IMR-90 (cell line): ENCODE measurements at regions of chr2 and their contacts with region 1.

Region 1: GRCh38 chr2:148644883-148645538 is 460 bp downstream of the EPC2 start:
- DNase-seq: peak; percentile 90
- ATAC-seq: peak; percentile 92
- H3K4me3 ChIP-seq: peak overlapping the region; percentile 86
- H3K27ac ChIP-seq: peak overlapping the region; percentile 98
- H3K4me1 ChIP-seq: no peaks in the 10 kb centered on the region
- H3K27me3 ChIP-seq: peaks cover 12% of the 10 kb centered on the region; the same call in 1 of the 2 replicates
- CTCF ChIP-seq: peak; percentile 37
- POLR2A ChIP-seq: peak; percentile 76
- RAD21 ChIP-seq: peak; percentile 24; the same call in 1 of the 2 replicates

Region 2: GRCh38 chr2:148781544-148781943 is 136.5 kb after region 1 on chr2:
- CTCF ChIA-PET with region 1: no interaction called
- POLR2A ChIA-PET with region 1: no interaction called
- dilution Hi-C with region 1: no loop called
- in situ Hi-C with region 1: no loop called
- intact Hi-C with region 1: loop called (anchors 5 kb)
- DNase-seq: no peak
- ATAC-seq: no peak
- H3K4me3 ChIP-seq: no peak overlapping the region
- H3K27ac ChIP-seq: no peak overlapping the region
- H3K4me1 ChIP-seq: peaks cover 9% of the 10 kb centered on the region
- H3K27me3 ChIP-seq: no peaks in the 10 kb centered on the region
- CTCF ChIP-seq: no peak
- POLR2A ChIP-seq: no peak
- RAD21 ChIP-seq: no peak

Region 3: GRCh38 chr2:148926291-148926961 is 281.4 kb after region 1 on chr2:
- CTCF ChIA-PET with region 1: no interaction called
- POLR2A ChIA-PET with region 1: no interaction called
- dilution Hi-C with region 1: no loop called
- in situ Hi-C with region 1: no loop called
- intact Hi-C with region 1: loop called (anchors 5 kb)
- DNase-seq: peak; percentile 12
- ATAC-seq: peak; percentile 77
- H3K4me3 ChIP-seq: no peak overlapping the region
- H3K27ac ChIP-seq: no peak overlapping the region
- H3K4me1 ChIP-seq: no peaks in the 10 kb centered on the region
- H3K27me3 ChIP-seq: no peaks in the 10 kb centered on the region
- CTCF ChIP-seq: peak; percentile 63
- POLR2A ChIP-seq: no peak
- RAD21 ChIP-seq: peak; percentile 51

Region 4: DNA sequence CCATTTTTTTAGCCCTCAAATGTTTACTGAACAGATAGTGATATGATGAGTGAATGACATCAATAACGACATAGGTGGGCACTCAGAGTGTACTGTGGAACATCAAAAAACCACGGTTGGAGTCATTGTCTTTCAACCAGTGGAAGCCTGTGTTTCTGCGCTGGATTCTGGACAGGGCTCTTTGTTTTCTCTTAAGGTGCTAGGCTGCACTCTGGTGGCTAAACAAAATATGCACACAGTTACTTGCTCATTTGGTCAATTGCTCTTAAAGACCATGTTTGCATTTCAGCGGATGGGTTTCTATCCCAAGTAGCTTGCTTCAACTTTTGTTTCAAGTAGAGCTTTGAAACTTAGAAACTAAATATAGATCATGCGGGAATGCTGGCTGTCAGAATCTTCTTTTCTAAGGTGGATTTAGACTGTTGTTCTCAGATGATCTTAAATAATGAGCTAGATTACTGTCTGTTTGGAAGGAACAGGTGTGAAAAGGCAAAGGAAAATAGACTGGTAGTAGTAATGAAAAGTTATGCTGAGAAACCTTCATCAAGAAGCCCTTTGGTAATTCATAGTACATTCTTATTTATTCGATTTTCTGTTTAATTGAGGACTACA is 345.0 kb after region 1 on chr2:
- CTCF ChIA-PET with region 1: interaction called, 4 read pairs
- POLR2A ChIA-PET with region 1: no interaction called
- dilution Hi-C with region 1: no loop called
- in situ Hi-C with region 1: no loop called
- intact Hi-C with region 1: loop called (anchors 1 kb)
- DNase-seq: peak; percentile 80
- ATAC-seq: peak; percentile 90
- H3K4me3 ChIP-seq: no peak overlapping the region
- H3K27ac ChIP-seq: no peak overlapping the region
- H3K4me1 ChIP-seq: no peaks in the 10 kb centered on the region
- H3K27me3 ChIP-seq: no peaks in the 10 kb centered on the region
- CTCF ChIP-seq: peak; percentile 71
- POLR2A ChIP-seq: no peak
- RAD21 ChIP-seq: peak; percentile 80

Region 5: GRCh38 chr2:149561309-149561926 is 916.4 kb after region 1 on chr2:
- CTCF ChIA-PET with region 1: no interaction called
- POLR2A ChIA-PET with region 1: no interaction called
- dilution Hi-C with region 1: no loop called
- in situ Hi-C with region 1: loop called (anchors 25 kb)
- intact Hi-C with region 1: loop called (anchors 10 kb)
- DNase-seq: peak; percentile 30
- ATAC-seq: peak; percentile 38; the same call in 1 of the 2 replicates
- H3K4me3 ChIP-seq: no peak overlapping the region
- H3K27ac ChIP-seq: no peak overlapping the region
- H3K4me1 ChIP-seq: no peaks in the 10 kb centered on the region
- H3K27me3 ChIP-seq: no peaks in the 10 kb centered on the region
- CTCF ChIP-seq: peak; percentile 83
- POLR2A ChIP-seq: no peak
- RAD21 ChIP-seq: peak; percentile 71

Region 6: DNA sequence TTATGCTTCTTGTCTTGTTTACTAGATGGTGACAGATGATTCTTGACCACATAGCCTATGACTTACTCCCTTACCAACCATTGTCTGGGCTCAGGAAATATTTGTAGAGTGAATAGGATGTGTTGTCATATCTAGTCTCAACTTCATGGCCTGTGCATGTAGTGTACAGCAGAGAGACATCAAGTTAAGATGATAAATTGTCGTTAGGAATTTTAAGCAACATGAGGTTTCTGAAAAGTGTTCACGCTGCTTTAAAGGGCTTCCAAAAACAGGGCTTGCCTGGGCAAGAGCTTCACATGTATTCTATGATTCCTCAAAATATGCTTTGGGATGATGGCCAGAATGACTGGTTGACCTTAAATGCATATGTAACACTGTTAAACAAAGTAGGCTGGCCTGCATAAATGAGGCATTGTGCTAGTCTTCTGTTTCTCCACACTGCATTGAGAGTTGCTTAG is 1418.5 kb after region 1 on chr2:
- CTCF ChIA-PET with region 1: no interaction called
- POLR2A ChIA-PET with region 1: no interaction called
- dilution Hi-C with region 1: no loop called
- in situ Hi-C with region 1: no loop called
- intact Hi-C with region 1: no loop called
- DNase-seq: peak; percentile 85
- ATAC-seq: peak; percentile 91
- H3K4me3 ChIP-seq: no peak overlapping the region
- H3K27ac ChIP-seq: 0 out of 2 replicates have a peak overlapping the region, but pooled peaks have one; percentile 27
- H3K4me1 ChIP-seq: peaks cover 5% of the 10 kb centered on the region
- H3K27me3 ChIP-seq: no peaks in the 10 kb centered on the region
- CTCF ChIP-seq: no peak
- POLR2A ChIP-seq: no peak
- RAD21 ChIP-seq: no peak